ENCODE measurements at regions of chr10 and their contacts with region 1.

Region 1: GRCh38 chr10:29096303-29096824 is 192.5 kb upstream of the LYZL1 start:
- DNase-seq: no peak
- H3K4me3 ChIP-seq: no peak overlapping the region
- H3K27ac ChIP-seq: no peak overlapping the region
- H3K4me1 ChIP-seq: no peaks in the 10 kb centered on the region
- H3K27me3 ChIP-seq: no peaks in the 10 kb centered on the region
- CTCF ChIP-seq: no peak
- POLR2A ChIP-seq: no peak

Region 2: GRCh38 chr10:27601503-27601902 is 1494.9 kb before region 1 on chr10:
- intact Hi-C with region 1: no loop called
- DNase-seq: no peak
- H3K4me3 ChIP-seq: no peak overlapping the region
- H3K27ac ChIP-seq: no peak overlapping the region
- H3K4me1 ChIP-seq: no peaks in the 10 kb centered on the region
- H3K27me3 ChIP-seq: no peaks in the 10 kb centered on the region
- CTCF ChIP-seq: no peak
- POLR2A ChIP-seq: no peak

Region 3: GRCh38 chr10:29117781-29118180 is 21.4 kb after region 1 on chr10:
- intact Hi-C with region 1: loop called (anchors 2 kb)
- DNase-seq: no peak
- H3K4me3 ChIP-seq: no peak overlapping the region
- H3K27ac ChIP-seq: no peak overlapping the region
- H3K4me1 ChIP-seq: no peaks in the 10 kb centered on the region
- H3K27me3 ChIP-seq: no peaks in the 10 kb centered on the region
- CTCF ChIP-seq: no peak
- POLR2A ChIP-seq: no peak